Sigmoid colon (tissue), 7 donors: ENCODE measurements at regions of chr3 and their contacts with region 1.

Region 1: DNA sequence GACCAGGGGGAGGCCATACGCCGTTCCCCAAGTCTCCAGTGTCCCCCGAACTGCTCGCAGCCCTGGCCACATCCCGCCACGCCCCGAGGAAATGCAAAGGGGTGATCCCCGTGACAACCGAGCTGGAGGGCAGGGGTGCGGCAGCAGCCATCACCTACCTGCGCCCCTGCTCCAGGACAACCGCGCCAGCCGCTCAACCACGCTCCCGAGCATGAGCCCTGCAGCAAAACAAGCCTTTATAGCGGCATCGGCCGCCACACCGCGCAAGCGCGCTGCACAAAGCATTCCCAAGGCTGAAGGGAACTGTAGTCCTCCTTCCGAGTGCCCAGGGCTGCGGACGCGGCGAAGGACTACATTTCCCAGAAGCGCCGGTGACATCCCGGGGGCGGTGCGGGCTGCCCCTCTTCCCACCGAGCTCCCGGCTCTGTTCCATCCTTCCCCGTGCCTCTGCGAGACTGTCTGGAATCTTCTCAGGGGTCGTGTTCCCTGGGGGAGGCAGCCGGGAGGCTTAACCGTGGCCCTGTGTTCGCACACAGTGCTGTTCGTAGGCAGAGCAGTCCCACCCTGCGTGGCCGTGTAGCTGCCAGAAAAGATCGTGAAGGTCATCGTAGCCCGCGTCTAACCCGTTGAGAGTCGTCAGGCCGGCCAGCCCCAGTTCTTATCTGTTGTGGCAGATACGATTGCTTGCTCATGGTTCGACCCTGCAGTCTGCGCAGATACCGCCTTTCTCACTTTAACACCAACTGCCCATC is at the start of gene ABCC5:
- DNase-seq: peak; percentile 97
- H3K4me3 ChIP-seq: peak within 1 kb of the TSS; percentile 78 to 98 (median 88)
- H3K27ac ChIP-seq: peak within 1 kb of the TSS; percentile 83 to 85 (median 85)
- H3K4me1 ChIP-seq: peaks cover 0 to 27% (median 12%) of the 10 kb centered on the region in 4 donors
- H3K27me3 ChIP-seq: no peaks in the 10 kb centered on the region
- CTCF ChIP-seq: peak in 3 of 4 experiments; percentile 67 to 91 (median 76)
- EP300 ChIP-seq: no peak
- POLR2A ChIP-seq: no peak
- total RNA-seq, gene ABCC5: 16.0 to 39.6 (median 21.0) TPM

Region 2: GRCh38 chr3:183697610-183698317 is 320.1 kb before region 1 on chr3 and contains the start of gene YEATS2:
- intact Hi-C with region 1: loop called (anchors 5 kb)
- DNase-seq: peak; percentile 68
- H3K4me3 ChIP-seq: peak within 1 kb of the TSS; percentile 88 to 98 (median 97)
- H3K27ac ChIP-seq: peak within 1 kb of the TSS; percentile 93 to 97 (median 94)
- H3K4me1 ChIP-seq: peaks cover 0 to 19% (median 16%) of the 10 kb centered on the region in 4 donors
- H3K27me3 ChIP-seq: no peaks in the 10 kb centered on the region
- CTCF ChIP-seq: no peak
- EP300 ChIP-seq: no peak
- POLR2A ChIP-seq: no peak
- total RNA-seq, gene YEATS2: 13.2 to 20.3 (median 16.3) TPM

Region 3: DNA sequence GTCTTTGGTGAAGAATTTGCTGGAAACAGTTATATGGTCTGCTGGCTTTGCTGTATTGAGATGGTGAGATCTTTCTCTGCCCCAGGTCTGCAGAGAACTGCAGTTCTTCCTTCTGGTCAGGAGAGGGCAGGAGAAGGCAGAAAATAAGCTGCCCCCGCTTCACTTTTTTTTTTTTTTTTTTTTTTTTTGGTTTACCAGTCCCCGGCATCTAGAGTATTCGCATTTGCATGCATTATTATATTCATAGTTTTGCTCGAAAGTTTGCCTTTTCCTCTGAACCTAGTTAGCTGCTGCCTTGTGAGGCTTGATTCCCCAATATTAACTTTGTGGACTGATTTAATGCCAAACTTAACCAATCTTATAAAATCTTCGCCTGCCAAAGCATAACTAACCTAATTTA is 122.6 kb before region 1 on chr3:
- intact Hi-C with region 1: loop called (anchors 1 kb)
- DNase-seq: no peak
- H3K4me3 ChIP-seq: no peak overlapping the region
- H3K27ac ChIP-seq: no peak overlapping the region
- H3K4me1 ChIP-seq: peaks cover 0 to 5% (median 0%) of the 10 kb centered on the region in 4 donors
- H3K27me3 ChIP-seq: peaks cover 0 to 22% (median 0%) of the 10 kb centered on the region in 3 donors
- CTCF ChIP-seq: peak; percentile 52 to 60 (median 58)
- EP300 ChIP-seq: no peak
- POLR2A ChIP-seq: no peak

Region 4: GRCh38 chr3:184185461-184186308 is 167.8 kb after region 1 on chr3 and contains the start of gene ABCF3:
- intact Hi-C with region 1: loop called (anchors 5 kb)
- DNase-seq: peak; percentile 100
- H3K4me3 ChIP-seq: peak within 1 kb of the TSS; percentile 71 to 98 (median 96)
- H3K27ac ChIP-seq: peak within 1 kb of the TSS; percentile 87 to 90 (median 88)
- H3K4me1 ChIP-seq: peaks cover 0 to 37% (median 29%) of the 10 kb centered on the region in 4 donors
- H3K27me3 ChIP-seq: no peaks in the 10 kb centered on the region
- CTCF ChIP-seq: no peak
- EP300 ChIP-seq: peak in 1 of 4 donors; percentile 48
- POLR2A ChIP-seq: peak; percentile 62 to 84
- total RNA-seq, gene ABCF3: 32.4 to 51.3 (median 39.2) TPM

Region 5: GRCh38 chr3:184250167-184250828 is 232.4 kb after region 1 on chr3:
- intact Hi-C with region 1: loop called (anchors 5 kb)
- DNase-seq: peak; percentile 88
- H3K4me3 ChIP-seq: peak overlapping the region; percentile 71 to 88 (median 81)
- H3K27ac ChIP-seq: peak overlapping the region; percentile 61 to 86 (median 84)
- H3K4me1 ChIP-seq: peaks cover 0 to 28% (median 15%) of the 10 kb centered on the region in 4 donors
- H3K27me3 ChIP-seq: no peaks in the 10 kb centered on the region
- CTCF ChIP-seq: peak; percentile 42 to 93 (median 86)
- EP300 ChIP-seq: no peak
- POLR2A ChIP-seq: no peak